PC-3 (cell line): ENCODE measurements at regions of chr2 and their contacts with region 1.

Region 1: GRCh38 chr2:42598656-42599055 is 30.2 kb downstream of the MTA3 start:
- DNase-seq: peak; percentile 10
- ATAC-seq: peak; percentile 37; the same call in 1 of the 2 replicates
- H3K4me3 ChIP-seq: no peak overlapping the region
- H3K27ac ChIP-seq: no peak overlapping the region
- H3K4me1 ChIP-seq: no peaks in the 10 kb centered on the region
- H3K27me3 ChIP-seq: no peaks in the 10 kb centered on the region
- CTCF ChIP-seq: peak; percentile 45

Region 2: GRCh38 chr2:42652086-42652485 is 53.4 kb after region 1 on chr2:
- CTCF ChIA-PET with region 1: no interaction called
- POLR2A ChIA-PET with region 1: interaction called, 17 read pairs
- intact Hi-C with region 1: no loop called
- DNase-seq: no peak
- ATAC-seq: no peak
- H3K4me3 ChIP-seq: no peak overlapping the region
- H3K27ac ChIP-seq: no peak overlapping the region
- H3K4me1 ChIP-seq: no peaks in the 10 kb centered on the region
- H3K27me3 ChIP-seq: no peaks in the 10 kb centered on the region
- CTCF ChIP-seq: no peak